IMR-90 (cell line): ENCODE measurements at regions of chr3 and their contacts with region 1.

Region 1: DNA sequence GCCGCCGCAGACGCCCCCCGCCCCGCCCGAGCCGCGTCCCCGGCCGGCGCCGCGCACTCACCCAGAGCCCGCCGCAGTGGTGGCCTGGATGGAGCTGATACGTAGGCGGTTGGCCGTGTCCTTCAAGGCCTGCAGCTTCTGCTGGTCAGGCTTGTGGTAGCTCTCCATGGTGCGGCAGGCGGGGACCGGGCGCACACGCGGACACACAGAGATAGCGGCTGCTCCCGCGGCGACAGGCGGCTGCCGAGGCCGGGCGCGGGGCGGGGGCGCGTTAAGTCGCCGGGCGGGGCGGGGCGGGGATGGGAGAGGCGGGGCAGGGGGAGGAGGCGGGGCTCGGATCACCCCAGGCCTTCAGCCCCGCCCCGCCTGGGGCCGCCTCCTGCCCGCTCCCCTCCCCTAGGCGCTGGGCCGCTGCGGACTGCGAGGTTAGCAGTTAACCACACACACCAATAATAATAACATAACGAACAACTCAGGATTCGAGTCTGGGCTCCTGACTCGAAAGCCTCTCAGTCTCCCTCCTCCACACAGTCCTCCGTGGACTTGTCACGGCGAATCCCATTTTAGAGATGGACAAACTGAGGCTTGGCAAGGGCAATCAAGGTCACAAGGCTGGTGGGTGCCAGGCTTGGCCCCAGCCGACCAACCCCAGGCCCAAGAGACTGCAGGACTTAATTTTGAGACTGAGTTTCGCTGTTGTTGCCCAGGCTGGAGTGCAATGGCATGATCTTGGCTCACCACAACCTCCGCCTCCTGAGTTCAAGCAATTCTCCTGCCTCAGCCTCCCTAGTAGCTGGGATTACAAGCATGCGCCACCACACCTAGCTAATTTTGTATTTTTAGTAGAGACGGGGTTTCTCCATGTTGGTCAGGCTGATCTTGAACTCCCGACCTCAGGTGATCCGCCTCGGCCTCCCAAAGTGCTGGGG is at the start of gene TKT:
- DNase-seq: peak; percentile 87
- ATAC-seq: peak; percentile 91
- H3K4me3 ChIP-seq: peak within 1 kb of the TSS; percentile 95
- H3K27ac ChIP-seq: peak within 1 kb of the TSS; percentile 92
- H3K4me1 ChIP-seq: peaks cover 11% of the 10 kb centered on the region
- H3K27me3 ChIP-seq: no peaks in the 10 kb centered on the region
- CTCF ChIP-seq: no peak
- POLR2A ChIP-seq: peak; percentile 69
- RAD21 ChIP-seq: no peak
- total RNA-seq, gene TKT: 301 and 349 TPM in 2 replicates

Region 2: DNA sequence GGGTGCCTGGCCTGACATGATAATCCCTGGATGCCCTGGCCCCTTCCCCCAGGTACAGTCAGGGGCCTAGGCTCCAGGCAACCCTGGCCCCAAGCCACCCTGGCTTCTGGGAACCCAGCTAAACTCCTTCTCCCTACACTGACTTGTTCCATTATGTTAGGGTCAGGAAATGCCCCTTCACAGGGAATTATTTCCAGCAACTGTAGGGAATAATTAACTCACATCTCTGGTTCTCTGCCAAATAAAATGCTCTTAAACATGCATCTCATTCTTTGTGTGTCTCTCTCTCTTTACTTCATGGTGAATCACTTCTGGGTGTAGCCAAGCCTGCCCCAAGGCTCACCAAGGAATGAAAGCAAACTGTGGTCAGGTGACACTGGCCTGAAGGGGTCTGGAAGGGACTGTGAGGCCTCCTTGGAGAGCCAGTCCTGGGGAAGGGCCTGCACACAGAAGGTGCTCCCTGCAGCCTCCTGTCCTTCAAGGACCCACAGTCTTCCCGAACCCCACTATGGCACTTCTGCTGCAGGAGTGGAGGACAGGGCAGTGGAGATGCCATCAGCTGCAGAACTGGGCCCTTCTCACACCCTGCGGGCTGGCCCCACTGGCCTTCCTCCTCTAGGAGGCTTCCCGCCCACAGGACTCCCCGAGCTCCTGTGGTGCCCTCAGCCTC is 17.9 kb before region 1 on chr3:
- CTCF ChIA-PET with region 1: no interaction called
- POLR2A ChIA-PET with region 1: interaction called, 3 read pairs
- dilution Hi-C with region 1: no loop called
- in situ Hi-C with region 1: no loop called
- intact Hi-C with region 1: loop called (anchors 2 kb)
- DNase-seq: peak; percentile 97
- ATAC-seq: peak; percentile 86
- H3K4me3 ChIP-seq: no peak overlapping the region
- H3K27ac ChIP-seq: peak overlapping the region; percentile 98
- H3K4me1 ChIP-seq: peaks cover 31% of the 10 kb centered on the region
- H3K27me3 ChIP-seq: no peaks in the 10 kb centered on the region
- CTCF ChIP-seq: no peak
- POLR2A ChIP-seq: no peak
- RAD21 ChIP-seq: no peak

Region 3: DNA sequence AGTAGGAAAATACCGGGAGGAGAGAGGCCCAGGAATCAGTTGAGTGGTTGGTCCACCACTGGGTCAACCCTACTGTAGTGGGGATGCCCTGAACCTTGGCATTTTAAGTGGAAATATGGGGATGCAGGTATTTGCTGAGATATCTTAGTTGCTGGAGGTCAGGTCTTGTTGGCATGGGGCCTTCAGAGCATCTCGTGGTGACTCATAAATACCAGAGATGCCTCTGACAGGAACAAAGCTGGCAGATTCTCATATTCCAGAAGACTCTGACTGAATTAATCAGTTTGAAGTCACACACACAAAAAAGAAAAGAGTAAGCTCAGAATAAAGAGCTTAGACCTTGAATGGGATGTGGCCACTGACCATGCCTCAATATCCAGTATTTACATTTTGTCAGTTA is 957.9 kb after region 1 on chr3:
- CTCF ChIA-PET with region 1: no interaction called
- POLR2A ChIA-PET with region 1: no interaction called
- dilution Hi-C with region 1: no loop called
- in situ Hi-C with region 1: no loop called
- intact Hi-C with region 1: no loop called
- DNase-seq: no peak
- ATAC-seq: no peak
- H3K4me3 ChIP-seq: no peak overlapping the region
- H3K27ac ChIP-seq: no peak overlapping the region
- H3K4me1 ChIP-seq: no peaks in the 10 kb centered on the region
- H3K27me3 ChIP-seq: no peaks in the 10 kb centered on the region
- CTCF ChIP-seq: no peak
- POLR2A ChIP-seq: no peak
- RAD21 ChIP-seq: no peak